ENCODE measurements at regions of chr3 and their contacts with region 1.

Region 1: DNA sequence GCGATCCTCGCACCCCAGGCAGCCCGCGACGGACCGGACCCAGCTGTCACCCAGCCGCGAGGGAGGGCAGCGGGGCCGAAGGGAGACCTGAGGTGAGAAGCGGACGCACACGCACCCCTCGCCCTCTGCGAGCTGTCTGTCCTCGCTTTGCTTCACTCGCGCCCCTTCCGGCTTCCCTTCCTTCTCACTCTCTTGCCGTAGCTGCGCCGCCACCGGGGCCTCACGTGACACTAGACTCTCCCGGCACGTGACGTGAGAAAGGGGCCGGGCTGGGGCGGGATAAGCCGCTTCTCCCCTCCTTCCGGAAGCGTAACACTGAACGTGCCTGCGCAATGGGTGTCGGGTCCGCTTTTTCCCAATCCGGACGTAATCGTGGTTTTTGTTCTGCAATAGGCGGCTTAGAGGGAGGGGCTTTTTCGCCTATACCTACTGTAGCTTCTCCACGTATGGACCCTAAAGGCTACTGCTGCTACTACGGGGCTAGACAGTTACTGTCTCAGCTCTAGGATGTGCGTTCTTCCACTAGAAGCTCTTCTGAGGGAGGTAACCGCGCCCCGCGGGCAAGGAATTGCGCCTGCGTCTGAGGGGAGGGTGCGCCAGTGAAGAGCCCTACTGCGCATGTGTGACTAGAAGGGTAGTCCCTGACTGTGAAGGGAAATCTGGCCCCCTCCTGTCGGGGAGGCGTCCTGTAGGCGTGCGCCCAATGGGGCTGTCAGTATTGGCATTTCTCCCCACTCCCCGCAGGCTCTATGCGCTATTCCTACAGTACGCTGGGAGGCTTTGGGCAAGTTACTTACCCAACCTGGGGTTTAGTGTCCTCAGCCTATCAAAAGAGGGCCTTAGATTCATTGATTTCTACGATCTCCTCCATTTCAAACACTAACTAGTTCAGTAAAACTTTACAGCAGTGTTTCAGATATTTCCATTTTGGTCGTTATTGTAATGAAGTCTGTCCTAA is at the starts of genes ATG3 and SLC35A5:
- DNase-seq: peak; percentile 98 to 100 (median 99)
- ATAC-seq: peak; percentile 75
- H3K4me3 ChIP-seq: peak within 1 kb of the TSS; percentile 85
- H3K4me3 Mint-ChIP-seq: peak within 1 kb of the TSS; percentile 100
- H3K27ac ChIP-seq: peak within 1 kb of the TSS; percentile 94 to 98
- H3K27ac Mint-ChIP-seq: peak within 1 kb of the TSS; percentile 100
- H3K4me1 ChIP-seq: peaks cover 17% of the 10 kb centered on the region
- H3K4me1 Mint-ChIP-seq: peaks cover 73% of the 10 kb centered on the region
- H3K27me3 ChIP-seq: no peaks in the 10 kb centered on the region
- H3K27me3 Mint-ChIP-seq: no peaks in the 10 kb centered on the region
- CTCF ChIP-seq: no peak
- total RNA-seq, gene ATG3: 43.3 to 43.8 TPM
- total RNA-seq, gene SLC35A5: 4.6 to 7.3 TPM

Region 2: GRCh38 chr3:112303764-112304325 is 258.2 kb before region 1 on chr3:
- CTCF ChIA-PET with region 1: no interaction called
- POLR2A ChIA-PET with region 1: interaction called, 13 read pairs
- intact Hi-C with region 1: no loop called
- DNase-seq: peak in 8 of 14 experiments; percentile 8 to 52 (median 23)
- ATAC-seq: peak; percentile 83
- H3K4me3 ChIP-seq: peak overlapping the region; percentile 60
- H3K4me3 Mint-ChIP-seq: no peak overlapping the region
- H3K27ac ChIP-seq: no peak overlapping the region
- H3K27ac Mint-ChIP-seq: no peak overlapping the region
- H3K4me1 ChIP-seq: peaks cover 22% of the 10 kb centered on the region
- H3K4me1 Mint-ChIP-seq: peaks cover 1% of the 10 kb centered on the region
- H3K27me3 ChIP-seq: no peaks in the 10 kb centered on the region
- H3K27me3 Mint-ChIP-seq: no peaks in the 10 kb centered on the region
- CTCF ChIP-seq: no peak

Region 3: DNA sequence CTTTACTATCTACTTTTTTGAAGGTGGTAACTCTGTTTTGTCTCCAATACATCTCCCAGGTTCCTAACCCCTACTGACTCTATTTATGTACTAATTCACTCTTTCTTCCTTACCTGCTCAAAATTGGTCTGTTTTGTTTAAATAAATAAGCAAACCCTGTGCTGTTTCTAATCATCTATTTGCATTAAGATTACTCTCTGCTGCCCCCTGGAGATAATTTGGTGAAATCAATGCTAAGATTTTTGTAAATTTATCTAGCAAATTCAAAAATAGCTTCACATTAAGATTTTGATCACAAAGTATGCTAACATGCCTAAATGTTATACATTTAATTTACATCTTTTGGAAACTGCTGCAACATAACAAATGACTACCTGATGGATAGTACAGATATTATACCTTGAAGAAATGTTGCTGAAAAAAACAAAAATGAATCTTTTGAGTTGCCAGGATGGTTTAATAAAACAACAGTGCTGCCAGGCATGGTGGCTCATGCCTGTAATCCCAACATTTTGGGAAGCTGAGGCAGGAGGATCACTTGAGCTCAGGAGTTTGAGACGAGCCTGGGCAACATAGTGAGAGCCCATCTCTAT is 417.3 kb after region 1 on chr3:
- CTCF ChIA-PET with region 1: interaction called, 3 read pairs
- POLR2A ChIA-PET with region 1: no interaction called
- intact Hi-C with region 1: loop called in 1 of 2 experiments (anchors 10 kb)
- DNase-seq: peak in 4 of 14 experiments; percentile 39 to 77 (median 72)
- ATAC-seq: no peak
- H3K4me3 ChIP-seq: no peak overlapping the region
- H3K4me3 Mint-ChIP-seq: peak overlapping the region; percentile 1
- H3K27ac ChIP-seq: no peak overlapping the region
- H3K27ac Mint-ChIP-seq: peak overlapping the region; percentile 6
- H3K4me1 ChIP-seq: peaks cover 36% of the 10 kb centered on the region
- H3K4me1 Mint-ChIP-seq: peaks cover 73% of the 10 kb centered on the region
- H3K27me3 ChIP-seq: no peaks in the 10 kb centered on the region
- H3K27me3 Mint-ChIP-seq: no peaks in the 10 kb centered on the region
- CTCF ChIP-seq: peak; percentile 94

Region 4: DNA sequence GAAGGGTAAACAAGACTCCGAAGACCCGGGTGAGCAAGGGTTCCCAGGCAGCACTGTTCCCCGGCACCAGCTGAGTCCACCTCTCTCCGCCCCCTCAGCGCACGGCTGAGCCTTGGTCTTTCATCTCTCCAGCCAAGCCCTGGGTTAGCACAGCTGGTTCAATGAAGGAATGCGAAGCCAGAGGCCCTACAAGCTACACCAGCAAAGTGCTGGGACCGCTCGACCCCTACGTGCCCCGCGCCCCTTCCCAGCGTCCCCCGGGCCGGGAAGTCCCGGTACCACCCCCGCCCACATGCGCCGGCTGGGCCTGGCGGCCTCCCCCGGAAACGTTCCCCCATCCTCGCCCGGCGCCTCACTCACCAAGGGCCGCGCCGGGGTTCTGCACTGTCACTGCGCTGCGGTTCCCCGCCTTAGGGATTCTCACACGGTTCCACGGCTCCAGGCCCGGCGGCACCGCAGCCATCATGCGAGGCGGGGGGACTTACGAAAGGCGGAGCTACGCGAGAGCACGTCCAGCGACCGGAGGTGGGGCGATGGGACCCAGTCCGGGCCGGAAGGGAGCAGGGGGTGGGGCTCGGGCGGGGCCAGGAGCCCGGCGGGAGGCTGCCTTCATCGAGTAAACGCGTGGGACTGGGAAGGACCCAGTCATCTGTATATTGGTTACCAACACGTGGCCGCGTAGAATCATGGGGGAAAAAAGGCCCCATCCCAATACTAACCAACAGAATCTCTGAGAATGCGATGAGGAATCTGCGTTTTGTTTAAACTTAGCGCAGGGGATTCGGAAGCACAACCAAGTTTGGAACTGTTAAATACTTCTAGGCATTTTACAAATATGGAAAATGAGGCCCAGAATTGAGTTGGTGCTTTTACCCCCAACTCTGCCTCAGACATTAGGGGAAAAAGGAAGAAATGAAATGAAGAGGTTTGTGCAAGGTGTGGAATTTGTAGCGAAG is 457.4 kb after region 1 on chr3:
- CTCF ChIA-PET with region 1: no interaction called
- POLR2A ChIA-PET with region 1: interaction called, 13 read pairs
- intact Hi-C with region 1: loop called in 1 of 2 experiments (anchors 2 kb)
- DNase-seq: peak; percentile 57 to 94 (median 76)
- ATAC-seq: peak; percentile 82
- H3K4me3 ChIP-seq: peak overlapping the region; percentile 78
- H3K4me3 Mint-ChIP-seq: peak overlapping the region; percentile 93
- H3K27ac ChIP-seq: peak overlapping the region; percentile 91 to 93
- H3K27ac Mint-ChIP-seq: peak overlapping the region; percentile 95
- H3K4me1 ChIP-seq: peaks cover 28% of the 10 kb centered on the region
- H3K4me1 Mint-ChIP-seq: peaks cover 72% of the 10 kb centered on the region
- H3K27me3 ChIP-seq: no peaks in the 10 kb centered on the region
- H3K27me3 Mint-ChIP-seq: no peaks in the 10 kb centered on the region
- CTCF ChIP-seq: no peak

Region 5: DNA sequence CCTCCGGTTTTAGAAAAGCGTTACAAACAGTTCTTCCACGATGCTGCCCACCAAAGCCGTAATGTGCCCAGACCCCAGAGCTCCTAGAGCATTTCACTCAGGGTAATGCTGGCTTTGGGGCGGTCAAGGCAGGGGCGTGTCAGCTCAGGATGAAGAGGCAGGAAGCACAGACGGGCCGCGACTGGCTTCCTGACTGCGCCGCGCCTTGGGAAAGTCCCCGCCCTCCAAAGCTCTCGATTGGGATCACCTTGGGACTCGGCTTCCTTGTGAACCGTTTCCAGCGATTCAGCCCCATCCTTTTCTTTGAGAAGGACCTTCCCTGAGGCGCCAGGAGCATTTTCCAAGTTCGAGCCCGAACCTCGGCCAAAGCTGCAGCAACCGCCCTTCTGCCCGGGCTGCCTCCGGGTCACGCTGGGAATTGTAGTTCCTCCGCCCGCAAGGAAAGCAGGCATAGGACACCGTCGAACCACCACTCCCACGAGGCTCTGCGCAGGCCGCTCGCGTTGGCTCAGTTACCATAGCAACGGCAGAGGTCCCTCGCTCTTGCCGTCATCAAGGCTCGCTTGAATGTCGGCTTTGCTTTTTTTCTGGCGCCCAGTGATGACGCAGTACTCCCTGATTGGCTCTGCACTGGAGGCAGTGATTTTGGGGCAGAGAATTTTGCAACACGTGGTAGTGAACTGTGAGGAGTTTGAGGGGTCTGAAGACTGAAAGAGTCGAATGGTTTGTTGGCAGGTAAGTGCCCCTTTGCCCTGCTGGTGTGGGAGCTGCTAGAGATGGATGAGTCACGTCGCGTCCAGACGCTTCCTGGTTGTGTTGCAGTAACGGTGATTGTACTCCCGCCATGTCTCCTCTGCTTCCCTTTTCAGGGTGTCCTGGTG is 1494.4 kb after region 1 on chr3 and contains the starts of genes CCDC191 and QTRT2:
- CTCF ChIA-PET with region 1: no interaction called
- POLR2A ChIA-PET with region 1: no interaction called
- intact Hi-C with region 1: loop called in 1 of 2 experiments (anchors 5 kb)
- DNase-seq: peak; percentile 93 to 100 (median 97)
- ATAC-seq: peak; percentile 95
- H3K4me3 ChIP-seq: peak within 1 kb of the TSS; percentile 88
- H3K4me3 Mint-ChIP-seq: peak within 1 kb of the TSS; percentile 95
- H3K27ac ChIP-seq: peak within 1 kb of the TSS; percentile 87 to 96
- H3K27ac Mint-ChIP-seq: peak within 1 kb of the TSS; percentile 94
- H3K4me1 ChIP-seq: peaks cover 18% of the 10 kb centered on the region
- H3K4me1 Mint-ChIP-seq: peaks cover 53% of the 10 kb centered on the region
- H3K27me3 ChIP-seq: no peaks in the 10 kb centered on the region
- H3K27me3 Mint-ChIP-seq: no peaks in the 10 kb centered on the region
- CTCF ChIP-seq: no peak
- total RNA-seq, gene CCDC191: 3.6 to 3.7 TPM
- total RNA-seq, gene QTRT2: 22.8 to 27.0 TPM